Heart left ventricle (tissue), 16 donors: ENCODE measurements at regions of chr12 and their contacts with region 1.

Region 1: GRCh38 chr12:96132819-96133218 is 61.4 kb upstream of the ELK3 start:
- DNase-seq: no peak
- ATAC-seq: peak in 1 of 4 donors; percentile 42
- H3K4me3 ChIP-seq: no peak overlapping the region
- H3K27ac ChIP-seq: no peak overlapping the region
- H3K4me1 ChIP-seq: peaks cover 0 to 12% (median 3%) of the 10 kb centered on the region in 12 donors
- H3K27me3 ChIP-seq: peaks cover 0 to 3% (median 0%) of the 10 kb centered on the region in 9 donors
- CTCF ChIP-seq: peak in 8 of 12 donors; percentile 19 to 48 (median 24)
- POLR2A ChIP-seq: no peak

Region 2: GRCh38 chr12:96061864-96062453 is 70.9 kb before region 1 on chr12:
- intact Hi-C with region 1: loop called in 4 of 10 experiments (anchors 2 to 5 kb)
- DNase-seq: peak; percentile 61 to 74 (median 71)
- ATAC-seq: peak; percentile 55 to 92 (median 86)
- H3K4me3 ChIP-seq: no peak overlapping the region
- H3K27ac ChIP-seq: peak overlapping the region in 2 of 12 donors; percentile 7 to 39
- H3K4me1 ChIP-seq: peaks cover 0 to 27% (median 3%) of the 10 kb centered on the region in 12 donors
- H3K27me3 ChIP-seq: no peaks in the 10 kb centered on the region
- CTCF ChIP-seq: peak; percentile 73 to 93 (median 82)
- POLR2A ChIP-seq: no peak

Region 3: GRCh38 chr12:96327346-96327745 is 194.5 kb after region 1 on chr12:
- intact Hi-C with region 1: no loop called
- DNase-seq: no peak
- ATAC-seq: peak in 1 of 4 donors; percentile 29
- H3K4me3 ChIP-seq: no peak overlapping the region
- H3K27ac ChIP-seq: no peak overlapping the region
- H3K4me1 ChIP-seq: peaks cover 0 to 24% (median 6%) of the 10 kb centered on the region in 12 donors
- H3K27me3 ChIP-seq: no peaks in the 10 kb centered on the region
- CTCF ChIP-seq: no peak
- POLR2A ChIP-seq: no peak

Region 4: GRCh38 chr12:96635834-96636233 is 503.0 kb after region 1 on chr12:
- intact Hi-C with region 1: no loop called
- DNase-seq: no peak
- ATAC-seq: no peak
- H3K4me3 ChIP-seq: no peak overlapping the region
- H3K27ac ChIP-seq: no peak overlapping the region
- H3K4me1 ChIP-seq: no peaks in the 10 kb centered on the region
- H3K27me3 ChIP-seq: no peaks in the 10 kb centered on the region
- CTCF ChIP-seq: no peak
- POLR2A ChIP-seq: no peak